Right ventricle myocardium inferior (tissue), 1 donor: ENCODE measurements at regions of chr19 and their contacts with region 1.

Region 1: GRCh38 chr19:13060964-13061927 is 41.4 kb downstream of the LYL1 start:
- DNase-seq: peak; percentile 93
- ATAC-seq: peak; percentile 75

Region 2: DNA sequence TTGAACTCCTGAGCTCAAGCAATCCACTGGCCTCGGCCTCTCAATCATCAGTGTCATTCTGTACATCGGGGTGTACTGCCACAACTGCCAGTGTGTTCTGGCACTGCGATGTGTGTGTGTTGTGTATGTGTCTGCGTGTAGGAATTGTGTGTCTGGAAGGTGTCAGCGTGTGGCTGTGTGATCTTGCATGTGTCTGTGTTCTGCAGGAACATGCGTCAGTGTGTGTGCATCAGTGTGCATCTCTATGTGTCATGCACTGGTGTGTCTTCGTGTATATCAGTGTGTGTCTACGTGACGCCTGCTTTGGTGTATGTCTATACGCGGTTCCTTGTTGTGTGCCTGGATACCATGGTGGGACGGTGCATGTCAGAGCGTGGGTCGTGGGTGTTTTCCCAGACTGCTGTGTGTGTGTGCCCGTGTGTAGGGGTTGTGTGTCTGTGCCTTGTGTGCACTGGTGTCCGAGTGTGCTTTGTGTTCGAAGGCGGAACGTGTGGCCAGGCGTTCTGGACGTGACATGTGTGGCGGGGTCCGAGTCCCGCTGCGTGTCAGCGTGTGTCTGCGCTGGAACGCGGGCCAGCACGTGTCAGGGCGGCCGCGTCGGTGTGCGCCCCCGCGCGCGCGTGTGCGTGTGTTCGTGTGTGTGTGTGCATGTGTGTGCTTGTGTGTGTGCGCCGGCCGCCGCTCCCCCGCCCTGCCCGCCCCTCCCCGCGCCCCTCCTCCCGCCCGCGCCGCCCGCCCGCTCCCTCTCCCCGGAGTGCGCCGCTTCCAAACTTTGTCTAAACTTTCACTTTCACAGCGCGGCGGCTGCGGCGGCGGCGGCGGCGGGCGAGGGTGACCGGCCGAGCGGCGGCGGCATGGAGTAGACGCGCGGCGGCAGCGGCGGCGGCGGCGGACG is 66.3 kb before region 1 on chr19 and contains the start of gene NFIX:
- intact Hi-C with region 1: loop called (anchors 1 kb)
- DNase-seq: peak; percentile 87
- ATAC-seq: peak; percentile 46
- total RNA-seq, gene NFIX: 159 TPM

Region 3: DNA sequence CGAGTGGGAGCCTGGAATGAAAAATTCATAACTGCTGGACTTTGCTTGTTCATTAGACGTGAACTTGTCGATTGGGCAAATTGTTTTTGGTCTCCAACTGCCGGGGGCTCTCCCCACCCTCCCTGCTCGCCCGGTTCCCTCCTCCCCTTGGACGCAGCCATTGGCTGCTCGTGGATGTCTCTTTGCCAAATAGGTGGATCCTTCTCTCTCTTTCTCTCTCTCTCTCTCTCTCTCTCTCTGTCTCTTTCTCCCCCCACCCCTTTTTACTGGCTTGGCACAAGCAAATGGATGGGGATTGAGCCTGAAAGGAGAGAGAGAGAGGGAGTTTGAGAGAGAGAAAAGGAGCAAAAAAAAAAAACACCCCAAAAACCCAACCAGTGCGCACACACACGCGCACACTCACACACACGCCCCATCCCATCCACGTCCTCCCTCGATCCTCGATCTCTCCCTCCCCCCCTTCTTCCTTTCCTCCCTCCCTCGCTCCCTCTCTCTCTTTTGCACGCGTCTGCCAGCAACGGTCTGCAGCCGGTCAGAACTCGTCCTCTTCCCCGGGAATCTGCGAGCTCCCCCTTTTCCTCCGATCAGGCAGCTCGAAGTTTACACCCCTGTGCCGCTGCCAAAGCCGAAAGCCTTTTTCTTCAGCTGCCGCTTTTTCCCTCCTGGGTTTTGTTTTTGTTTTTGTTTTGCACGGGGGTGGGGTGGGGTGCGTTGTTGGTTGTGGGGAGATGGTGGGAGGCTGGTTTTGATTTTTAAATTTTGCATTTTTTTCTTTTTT is 38.2 kb before region 1 on chr19:
- intact Hi-C with region 1: loop called (anchors 5 kb)
- DNase-seq: peak; percentile 86
- ATAC-seq: peak; percentile 89

Region 4: DNA sequence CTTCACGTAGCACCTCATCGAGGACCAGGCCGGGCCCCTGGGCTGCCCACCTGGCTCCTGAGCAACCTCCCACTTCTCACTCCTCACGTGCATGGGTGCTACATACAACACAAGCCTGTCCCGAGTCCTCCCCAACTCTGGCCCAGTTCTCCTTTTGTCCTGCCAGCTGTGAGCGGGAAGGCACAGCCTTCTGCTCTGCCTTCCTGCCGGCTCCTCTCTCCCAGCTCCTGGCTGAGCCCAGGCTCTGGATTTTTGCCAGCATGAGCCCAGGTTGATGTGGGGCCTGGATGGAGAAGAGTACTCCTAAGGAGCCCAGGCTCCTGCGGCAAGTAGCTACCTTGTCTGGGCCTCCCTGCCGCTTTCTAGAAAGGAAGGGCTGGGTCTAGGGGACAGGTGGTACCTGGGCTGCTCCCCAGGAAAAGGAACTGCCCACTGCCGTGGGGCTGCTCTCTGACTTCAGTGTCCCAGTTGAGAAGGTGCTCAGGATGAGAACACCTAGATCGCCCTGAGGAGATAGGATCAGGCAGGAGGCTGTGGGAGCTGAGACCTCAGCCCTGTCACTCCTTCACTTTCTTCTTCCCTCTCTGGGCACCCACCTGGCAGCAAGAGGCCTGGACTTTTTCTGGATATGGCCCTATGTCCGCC is 17.8 kb after region 1 on chr19:
- intact Hi-C with region 1: no loop called
- DNase-seq: no peak
- ATAC-seq: peak; percentile 48